ENCODE measurements at regions of chr14 and their contacts with region 1.

Region 1: DNA sequence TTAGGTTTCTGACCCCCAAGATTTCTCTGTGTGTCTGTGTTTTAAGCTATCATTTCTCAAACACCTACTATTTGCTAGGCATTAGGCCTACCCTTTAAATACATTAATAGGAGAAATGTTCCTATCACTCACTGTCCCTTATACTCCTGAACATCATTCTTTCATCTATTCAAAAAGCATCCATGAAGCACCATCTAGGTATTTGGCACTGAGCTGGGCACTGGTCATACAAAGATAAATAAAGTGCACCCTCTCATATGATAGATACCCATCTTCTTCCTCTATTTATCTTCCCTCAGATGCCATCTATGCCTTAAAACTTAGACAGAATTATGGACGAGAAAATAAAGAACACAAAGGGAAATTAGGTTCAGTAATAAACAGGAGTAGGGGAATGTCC is 20.4 kb downstream of the SIX1 start:
- DNase-seq: no peak
- H3K4me3 ChIP-seq: no peak overlapping the region
- H3K27ac ChIP-seq: no peak overlapping the region
- H3K4me1 ChIP-seq: no peaks in the 10 kb centered on the region
- H3K27me3 ChIP-seq: no peaks in the 10 kb centered on the region
- CTCF ChIP-seq: no peak
- EP300 ChIP-seq: no peak
- POLR2A ChIP-seq: no peak

Region 2: DNA sequence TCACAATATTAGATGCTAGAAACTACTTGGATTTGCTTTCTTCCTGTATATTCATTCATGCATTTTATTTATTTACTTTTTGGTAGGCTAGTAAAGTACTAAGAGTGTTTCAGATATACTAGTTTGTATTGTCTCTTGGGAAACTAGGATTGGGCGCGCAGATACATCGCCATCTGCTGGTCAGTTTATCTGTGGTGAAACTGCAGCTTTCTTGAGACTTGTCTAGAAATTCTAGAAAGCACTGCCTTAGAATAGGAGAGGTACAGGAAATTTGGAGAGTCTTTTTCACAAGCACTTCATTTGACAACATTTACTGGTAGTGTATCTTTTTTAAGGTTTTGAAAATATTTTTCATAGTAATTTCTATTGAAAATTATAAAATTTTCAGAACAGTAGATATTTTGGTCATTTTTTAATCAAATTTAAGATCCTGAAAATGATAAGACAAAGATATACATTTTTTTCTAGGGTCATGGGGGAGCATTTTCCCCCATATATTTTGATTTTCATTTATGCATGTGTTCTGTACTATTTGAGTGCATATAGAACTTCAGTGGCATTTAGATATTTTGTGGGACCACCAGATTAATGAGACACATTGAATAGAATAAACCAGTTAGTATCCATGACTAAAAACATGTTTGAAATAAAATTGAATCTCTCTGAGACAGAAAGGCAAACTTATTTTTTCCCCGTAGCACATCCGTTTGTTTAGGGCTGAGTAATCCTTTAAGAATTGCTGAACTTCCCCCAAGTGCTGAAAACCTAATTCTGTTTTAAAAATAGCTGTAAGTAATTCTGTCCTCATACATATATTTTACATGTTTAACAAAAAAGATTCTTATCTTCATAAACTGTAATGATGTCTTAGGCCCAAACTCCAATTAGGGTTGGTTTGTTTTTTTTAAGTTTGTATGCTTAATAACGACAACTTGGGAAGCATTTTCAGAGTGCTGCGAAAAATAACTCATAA is 396.6 kb after region 1 on chr14:
- intact Hi-C with region 1: loop called (anchors 5 to 10 kb)
- DNase-seq: peak; percentile 33 to 65 (median 44)
- H3K4me3 ChIP-seq: no peak overlapping the region
- H3K27ac ChIP-seq: no peak overlapping the region
- H3K4me1 ChIP-seq: no peaks in the 10 kb centered on the region
- H3K27me3 ChIP-seq: no peaks in the 10 kb centered on the region
- CTCF ChIP-seq: peak; percentile 59 to 70 (median 64)
- EP300 ChIP-seq: no peak
- POLR2A ChIP-seq: no peak

Region 3: DNA sequence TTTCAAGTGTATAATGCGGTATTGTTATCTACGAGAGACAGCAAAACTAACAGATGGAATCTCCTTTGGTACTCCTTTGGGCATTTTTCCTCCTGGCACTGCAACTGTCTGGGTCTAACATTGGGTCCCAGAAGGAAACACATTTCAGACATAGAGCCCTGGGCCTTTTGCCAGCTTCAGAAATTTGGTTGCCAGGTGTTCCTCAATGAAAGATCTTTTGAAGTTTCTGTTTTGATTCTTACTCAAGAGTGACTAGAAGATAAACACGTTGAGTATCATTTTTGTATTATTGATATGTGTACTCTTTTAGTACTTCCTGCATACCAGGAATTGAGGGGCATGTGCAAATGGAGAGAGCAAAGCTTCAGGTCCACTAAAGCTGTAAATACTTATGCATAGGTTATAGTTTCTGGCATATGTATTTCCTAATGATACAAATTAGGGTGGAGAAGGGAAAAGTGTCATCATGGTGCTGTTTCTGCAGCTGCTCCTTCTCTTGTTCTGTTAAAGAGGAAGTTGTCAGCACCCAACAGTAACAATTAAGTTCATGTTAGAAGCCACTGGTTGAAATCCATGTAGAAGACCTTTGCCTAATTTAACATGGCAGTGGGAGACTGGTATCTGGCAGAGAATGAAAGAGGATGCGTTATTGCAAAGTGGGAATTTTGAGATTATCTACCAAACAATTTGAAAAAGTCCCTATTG is 405.7 kb after region 1 on chr14:
- intact Hi-C with region 1: loop called (anchors 5 to 10 kb)
- DNase-seq: no peak
- H3K4me3 ChIP-seq: no peak overlapping the region
- H3K27ac ChIP-seq: no peak overlapping the region
- H3K4me1 ChIP-seq: no peaks in the 10 kb centered on the region
- H3K27me3 ChIP-seq: no peaks in the 10 kb centered on the region
- CTCF ChIP-seq: no peak
- EP300 ChIP-seq: no peak
- POLR2A ChIP-seq: no peak